K562 (cell line): ENCODE measurements at regions of chr10 and their contacts with region 1.

Region 1: GRCh38 chr10:50396491-50397311 is 145.4 kb upstream of the ASAH2 start:
- DNase-seq: peak in 2 of 4 experiments; percentile 37 to 75
- ATAC-seq: peak; percentile 79
- H3K4me3 ChIP-seq: no peak overlapping the region
- H3K27ac ChIP-seq: peak overlapping the region; percentile 37; the same call in 1 of the 3 replicates
- H3K4me1 ChIP-seq: peaks cover 14 to 57% of the 10 kb centered on the region in 2 experiments
- H3K27me3 ChIP-seq: no peaks in the 10 kb centered on the region
- CTCF ChIP-seq: no peak
- EP300 ChIP-seq: no peak; the same call in 1 of the 2 replicates
- POLR2A ChIP-seq: no peak
- RAD21 ChIP-seq: no peak

Region 2: DNA sequence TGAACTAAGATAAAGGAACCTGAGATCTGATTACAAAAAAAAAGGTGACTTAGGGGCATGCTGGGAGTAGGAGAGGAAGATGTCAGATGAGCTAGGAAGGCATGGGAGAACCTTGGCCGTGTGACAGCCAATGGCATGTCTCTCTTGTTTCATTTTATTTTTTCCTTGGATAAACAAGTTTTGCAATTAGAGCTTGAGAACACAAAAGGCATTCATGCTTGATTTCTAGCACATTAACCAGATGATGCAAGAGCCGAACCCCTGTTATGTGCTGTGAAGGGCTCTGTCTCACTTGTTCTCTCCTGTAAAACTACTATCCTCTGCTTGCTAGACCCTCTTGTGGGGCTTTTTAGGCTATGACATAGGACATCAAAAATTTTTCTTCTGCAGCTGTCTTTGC is 11.1 kb before region 1 on chr10:
- CTCF ChIA-PET with region 1: no interaction called
- POLR2A ChIA-PET with region 1: interaction called, 23 read pairs
- in situ Hi-C with region 1: no loop called
- intact Hi-C with region 1: no loop called
- DNase-seq: no peak
- ATAC-seq: peak; percentile 44
- H3K4me3 ChIP-seq: no peak overlapping the region
- H3K27ac ChIP-seq: peak overlapping the region; percentile 3; the same call in 1 of the 3 replicates
- H3K4me1 ChIP-seq: peaks cover 12 to 42% of the 10 kb centered on the region in 2 experiments
- H3K27me3 ChIP-seq: no peaks in the 10 kb centered on the region
- CTCF ChIP-seq: no peak
- EP300 ChIP-seq: no peak
- POLR2A ChIP-seq: no peak
- RAD21 ChIP-seq: no peak

Region 3: DNA sequence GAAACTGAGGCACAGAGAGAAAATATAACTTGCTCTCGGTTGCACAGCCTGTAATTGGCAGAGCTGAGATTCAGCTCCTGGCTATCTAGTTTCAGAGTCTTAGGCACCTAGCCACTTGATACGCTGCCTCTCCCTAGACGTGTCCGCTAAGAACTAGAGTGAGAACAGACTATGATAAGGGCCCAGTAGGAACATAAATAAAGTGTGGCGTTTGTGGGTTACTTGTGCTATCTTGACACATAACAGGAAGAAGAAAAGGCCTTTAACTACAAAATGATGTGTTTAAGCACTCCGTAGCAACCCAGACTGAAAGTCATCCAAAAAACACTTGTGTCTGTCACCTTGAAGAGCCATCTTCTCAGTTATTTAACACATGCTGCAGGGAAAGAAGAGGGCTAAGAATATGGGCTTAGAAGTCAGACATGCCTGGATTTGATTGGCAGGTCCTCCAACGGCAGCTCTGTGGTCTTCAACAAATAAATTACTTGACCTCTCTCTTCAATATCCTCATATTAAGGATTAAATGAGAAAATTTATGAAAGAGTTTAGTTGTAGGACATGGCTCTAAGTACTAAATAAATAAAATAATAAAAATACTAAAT is 130.8 kb after region 1 on chr10:
- CTCF ChIA-PET with region 1: no interaction called
- POLR2A ChIA-PET with region 1: no interaction called
- in situ Hi-C with region 1: no loop called
- intact Hi-C with region 1: no loop called
- DNase-seq: peak in 2 of 4 experiments; percentile 59 to 71
- ATAC-seq: peak; percentile 84
- H3K4me3 ChIP-seq: no peak overlapping the region
- H3K27ac ChIP-seq: peak overlapping the region; percentile 17; the same call in 1 of the 3 replicates
- H3K4me1 ChIP-seq: peaks cover 6 to 27% of the 10 kb centered on the region in 2 experiments
- H3K27me3 ChIP-seq: no peaks in the 10 kb centered on the region
- CTCF ChIP-seq: no peak
- EP300 ChIP-seq: no peak
- POLR2A ChIP-seq: no peak
- RAD21 ChIP-seq: peak; percentile 6 to 7; a peak in 1 of 4 replicates

Region 4: GRCh38 chr10:50593523-50594376 is 197.0 kb after region 1 on chr10:
- CTCF ChIA-PET with region 1: no interaction called
- POLR2A ChIA-PET with region 1: no interaction called
- in situ Hi-C with region 1: no loop called
- intact Hi-C with region 1: no loop called
- DNase-seq: no peak
- ATAC-seq: peak; percentile 47
- H3K4me3 ChIP-seq: no peak overlapping the region
- H3K27ac ChIP-seq: peak overlapping the region; percentile 81
- H3K4me1 ChIP-seq: peaks cover 6 to 51% of the 10 kb centered on the region in 2 experiments; a peak in 3 of 5 replicates
- H3K27me3 ChIP-seq: no peaks in the 10 kb centered on the region
- CTCF ChIP-seq: no peak
- EP300 ChIP-seq: no peak
- POLR2A ChIP-seq: no peak
- RAD21 ChIP-seq: no peak